HepG2 (cell line): ENCODE measurements at regions of chr3 and their contacts with region 1.

Region 1: GRCh38 chr3:149536429-149536828 is 61.9 kb downstream of the TM4SF4 start:
- DNase-seq: no peak
- ATAC-seq: no peak
- H3K4me3 ChIP-seq: no peak overlapping the region
- H3K27ac ChIP-seq: no peak overlapping the region
- H3K4me1 ChIP-seq: peaks cover 37% of the 10 kb centered on the region
- H3K27me3 ChIP-seq: no peaks in the 10 kb centered on the region
- CTCF ChIP-seq: no peak
- EP300 ChIP-seq: no peak
- POLR2A ChIP-seq: no peak
- RAD21 ChIP-seq: no peak

Region 2: DNA sequence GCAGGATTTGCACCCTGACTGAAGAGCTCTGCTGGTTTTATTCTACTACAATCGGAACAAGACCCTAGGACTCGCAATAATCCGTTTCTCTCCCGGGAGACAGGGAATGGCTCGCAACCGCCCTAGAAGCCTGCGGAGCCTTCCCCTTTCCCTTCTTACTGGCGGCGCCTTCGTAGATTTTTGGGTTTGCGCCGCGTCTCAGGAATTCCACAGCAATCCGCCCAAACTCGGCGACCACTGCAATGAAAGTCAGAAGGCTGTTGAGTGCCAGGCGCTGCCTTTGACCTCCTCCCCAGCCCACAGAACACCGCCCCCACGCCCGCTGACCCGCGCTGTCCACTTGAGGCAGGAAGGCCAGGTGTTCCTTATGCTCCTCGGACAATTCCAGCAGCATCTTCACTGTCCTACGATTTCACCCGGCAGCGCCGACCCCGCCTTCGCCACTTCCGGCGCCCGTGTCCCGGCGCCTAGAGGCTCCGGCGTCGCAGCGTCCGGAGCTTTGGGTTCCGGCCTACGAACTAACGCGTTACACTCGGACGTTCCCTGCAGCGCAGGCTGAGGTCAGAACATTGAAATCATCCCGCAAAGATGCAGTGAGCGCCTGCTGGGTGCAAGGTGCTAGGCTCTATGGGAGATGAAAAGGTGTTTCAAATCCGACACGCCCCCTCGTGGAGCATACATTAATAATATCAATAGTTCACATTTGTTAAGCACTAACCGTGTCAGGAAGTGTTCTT is 215.8 kb after region 1 on chr3 and contains the start of gene COMMD2:
- CTCF ChIA-PET with region 1: no interaction called
- POLR2A ChIA-PET with region 1: no interaction called
- in situ Hi-C with region 1: no loop called
- intact Hi-C with region 1: loop called (anchors 5 kb)
- DNase-seq: peak; percentile 90
- ATAC-seq: peak; percentile 100
- H3K4me3 ChIP-seq: peak within 1 kb of the TSS; percentile 88 to 99 (median 97)
- H3K27ac ChIP-seq: peak within 1 kb of the TSS; percentile 67
- H3K4me1 ChIP-seq: peaks cover 25% of the 10 kb centered on the region
- H3K27me3 ChIP-seq: no peaks in the 10 kb centered on the region; a peak in 1 of 5 replicates
- CTCF ChIP-seq: peak; percentile 70
- EP300 ChIP-seq: peak; percentile 29 to 60; a peak in 2 of 4 replicates
- POLR2A ChIP-seq: peak; percentile 79 to 89
- RAD21 ChIP-seq: no peak; the same call in 1 of the 2 replicates
- total RNA-seq, gene COMMD2: 57.6 and 73.2 TPM in 2 replicates